ENCODE measurements at regions of chr11 and their contacts with region 1.

Region 1: GRCh38 chr11:69403556-69404215 is 77.8 kb upstream of the LINC01488 start:
- DNase-seq: no peak
- H3K4me3 ChIP-seq: no peak overlapping the region
- H3K27ac ChIP-seq: no peak overlapping the region
- H3K4me1 ChIP-seq: peaks cover 12% of the 10 kb centered on the region
- H3K27me3 ChIP-seq: no peaks in the 10 kb centered on the region
- CTCF ChIP-seq: no peak

Region 2: DNA sequence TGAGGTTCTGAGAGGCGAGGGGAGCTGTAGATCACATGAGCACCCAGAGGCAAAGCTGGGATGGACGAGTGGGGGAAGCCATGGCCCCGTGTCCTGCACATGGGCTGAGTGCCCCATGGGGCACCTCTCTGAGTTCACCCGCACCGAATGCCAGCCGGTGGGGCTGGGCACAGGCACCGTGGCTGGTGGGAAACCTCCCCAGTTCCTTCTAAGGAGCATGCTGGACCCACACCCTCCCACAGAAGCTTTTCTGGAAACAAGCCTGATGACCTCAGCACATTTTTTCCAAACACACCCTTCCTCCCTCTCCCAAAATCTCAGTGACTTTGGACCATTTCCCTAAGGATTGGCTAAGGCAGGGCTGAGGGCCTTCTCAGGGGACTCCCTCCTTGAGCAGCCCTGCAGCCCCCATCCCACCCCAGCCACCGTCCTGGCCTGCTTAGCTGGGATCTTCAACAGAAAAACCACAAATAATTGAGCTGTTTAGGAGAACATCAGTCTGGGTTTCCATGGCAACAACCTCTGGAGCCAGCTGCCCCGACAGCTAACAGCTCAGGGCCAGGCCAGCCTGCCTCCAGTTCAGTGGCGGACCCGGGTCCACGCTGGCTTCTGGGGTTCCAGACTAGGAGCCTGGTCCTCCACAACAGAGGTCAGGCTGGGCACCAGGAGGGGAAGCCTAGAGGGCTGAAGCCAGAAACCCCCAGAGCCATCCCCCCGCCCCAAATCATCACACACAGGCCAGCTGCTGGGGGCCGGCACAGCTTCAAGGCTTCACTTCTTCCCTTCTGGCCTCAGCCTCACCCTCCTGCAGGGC is 59.7 kb after region 1 on chr11:
- CTCF ChIA-PET with region 1: no interaction called
- dilution Hi-C with region 1: loop called (anchors 10 kb)
- in situ Hi-C with region 1: no loop called
- intact Hi-C with region 1: no loop called
- DNase-seq: no peak
- H3K4me3 ChIP-seq: no peak overlapping the region
- H3K27ac ChIP-seq: no peak overlapping the region
- H3K4me1 ChIP-seq: peaks cover 12% of the 10 kb centered on the region
- H3K27me3 ChIP-seq: no peaks in the 10 kb centered on the region
- CTCF ChIP-seq: no peak

Region 3: DNA sequence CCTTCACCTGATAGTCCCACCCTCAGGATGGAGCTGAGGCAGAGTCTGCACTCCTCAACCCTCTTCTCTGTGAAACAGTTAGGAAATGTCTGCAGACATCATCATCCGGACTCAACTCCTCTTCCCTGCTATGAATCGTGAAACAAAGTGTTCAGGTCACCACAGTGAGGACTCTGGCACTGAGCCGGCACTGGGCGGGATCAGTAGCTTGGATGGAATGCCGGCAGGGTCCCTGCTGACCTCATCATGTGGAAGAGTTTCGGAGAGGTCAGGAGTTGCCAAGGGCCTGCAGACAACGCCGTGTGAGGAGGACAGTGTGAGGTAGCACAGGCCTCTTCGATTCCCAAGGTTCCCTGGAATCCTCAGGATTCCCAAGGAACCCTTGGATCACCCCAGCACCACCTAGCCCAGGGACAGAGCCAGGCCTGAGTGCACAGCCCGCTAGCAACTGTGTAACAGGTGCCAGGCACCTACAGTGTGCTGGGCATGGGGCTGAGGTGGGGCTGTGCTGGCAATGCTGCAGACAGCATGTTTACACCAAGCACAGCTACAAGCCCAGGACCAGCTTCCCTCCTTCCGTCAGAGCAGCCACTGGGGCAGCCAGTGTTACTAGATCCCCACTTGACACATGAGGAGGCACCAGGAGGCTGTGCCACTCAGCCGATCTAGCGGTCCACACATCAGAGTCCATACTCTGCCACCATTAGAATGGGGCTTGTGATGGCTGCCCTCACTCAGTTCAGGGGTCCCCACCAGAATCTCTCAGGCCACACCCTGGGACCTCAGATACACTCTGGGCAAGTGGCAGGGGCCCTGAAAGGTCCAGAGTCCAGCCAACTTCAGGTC is 77.1 kb after region 1 on chr11:
- CTCF ChIA-PET with region 1: no interaction called
- dilution Hi-C with region 1: no loop called
- in situ Hi-C with region 1: no loop called
- intact Hi-C with region 1: no loop called
- DNase-seq: no peak
- H3K4me3 ChIP-seq: no peak overlapping the region
- H3K27ac ChIP-seq: no peak overlapping the region
- H3K4me1 ChIP-seq: peaks cover 5% of the 10 kb centered on the region
- H3K27me3 ChIP-seq: no peaks in the 10 kb centered on the region
- CTCF ChIP-seq: no peak

Region 4: GRCh38 chr11:69801519-69802335 is 398.0 kb after region 1 on chr11:
- CTCF ChIA-PET with region 1: no interaction called
- dilution Hi-C with region 1: no loop called
- in situ Hi-C with region 1: no loop called
- intact Hi-C with region 1: no loop called
- DNase-seq: no peak
- H3K4me3 ChIP-seq: no peak overlapping the region
- H3K27ac ChIP-seq: no peak overlapping the region
- H3K4me1 ChIP-seq: no peaks in the 10 kb centered on the region
- H3K27me3 ChIP-seq: no peaks in the 10 kb centered on the region
- CTCF ChIP-seq: peak; percentile 67 to 84